HepG2 (cell line): ENCODE measurements at regions of chr3 and their contacts with region 1.

Region 1: GRCh38 chr3:103976931-103977339 is 1389.8 kb upstream of the ALCAM start:
- DNase-seq: peak; percentile 95
- ATAC-seq: peak; percentile 100
- H3K4me3 ChIP-seq: peak overlapping the region in 1 of 3 experiments; percentile 25; a peak in 2 of 6 replicates
- H3K27ac ChIP-seq: peak overlapping the region; percentile 96
- H3K4me1 ChIP-seq: peaks cover 43% of the 10 kb centered on the region
- H3K27me3 ChIP-seq: no peaks in the 10 kb centered on the region
- CTCF ChIP-seq: no peak
- EP300 ChIP-seq: peak; percentile 20 to 95; a peak in 2 of 4 replicates
- POLR2A ChIP-seq: no peak
- RAD21 ChIP-seq: no peak

Region 2: DNA sequence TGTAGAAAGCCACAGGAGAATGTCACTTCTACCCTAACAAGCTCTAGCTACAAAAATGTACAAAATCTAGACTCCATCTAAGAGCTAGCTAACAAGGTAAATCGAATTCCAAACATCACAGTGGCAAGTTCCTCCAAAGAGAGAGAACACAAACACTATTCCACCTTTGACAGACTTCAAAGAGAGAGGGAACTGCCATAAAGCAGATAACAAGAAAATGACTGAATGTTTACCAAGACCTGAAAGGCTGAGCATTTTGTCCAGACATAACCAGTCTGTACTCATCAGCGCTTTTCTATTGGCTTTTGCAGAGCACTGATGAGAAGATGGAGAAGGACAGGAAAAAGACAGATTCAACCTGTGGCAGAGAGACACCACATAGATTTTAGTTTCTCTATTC is 29.9 kb before region 1 on chr3:
- CTCF ChIA-PET with region 1: no interaction called
- POLR2A ChIA-PET with region 1: interaction called, 3 read pairs
- in situ Hi-C with region 1: no loop called
- intact Hi-C with region 1: loop called (anchors 2 kb)
- DNase-seq: peak; percentile 69
- ATAC-seq: peak; percentile 96
- H3K4me3 ChIP-seq: peak overlapping the region in 2 of 3 experiments; percentile 18 to 36; a peak in 2 of 6 replicates
- H3K27ac ChIP-seq: no peak overlapping the region
- H3K4me1 ChIP-seq: peaks cover 13% of the 10 kb centered on the region
- H3K27me3 ChIP-seq: no peaks in the 10 kb centered on the region
- CTCF ChIP-seq: no peak
- EP300 ChIP-seq: peak in 1 of 2 experiments; percentile 53; a peak in 1 of 4 replicates
- POLR2A ChIP-seq: no peak
- RAD21 ChIP-seq: no peak

Region 3: DNA sequence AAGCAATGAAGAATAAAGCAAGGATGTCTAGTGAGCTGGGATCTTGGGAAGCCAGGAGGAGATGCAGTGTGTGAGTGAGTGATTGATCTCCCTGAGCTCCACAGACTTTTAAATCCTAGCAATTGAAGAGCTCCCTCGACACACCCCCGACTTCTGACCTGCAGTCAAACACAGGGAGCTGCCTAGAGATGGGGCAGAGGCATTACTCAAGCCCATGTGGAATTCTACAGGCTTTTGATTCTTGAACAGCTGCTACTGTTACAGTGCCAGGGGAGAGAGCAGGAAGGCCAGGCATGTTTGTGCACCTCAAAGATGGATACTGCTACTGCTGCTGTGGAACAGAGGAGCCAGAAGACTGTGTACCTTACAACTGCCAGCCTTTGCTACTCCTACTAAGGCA is 13.3 kb before region 1 on chr3:
- CTCF ChIA-PET with region 1: no interaction called
- POLR2A ChIA-PET with region 1: interaction called, 14 read pairs
- in situ Hi-C with region 1: no loop called
- intact Hi-C with region 1: no loop called
- DNase-seq: peak; percentile 57
- ATAC-seq: peak; percentile 97
- H3K4me3 ChIP-seq: 0 out of 6 replicates have a peak overlapping the region, but pooled peaks of 1 of the 3 experiments have one; percentile 7
- H3K27ac ChIP-seq: peak overlapping the region; percentile 34
- H3K4me1 ChIP-seq: peaks cover 46% of the 10 kb centered on the region
- H3K27me3 ChIP-seq: no peaks in the 10 kb centered on the region
- CTCF ChIP-seq: no peak
- EP300 ChIP-seq: no peak
- POLR2A ChIP-seq: no peak
- RAD21 ChIP-seq: no peak